A673 (cell line): ENCODE measurements at regions of chr12 and their contacts with region 1.

Region 1: DNA sequence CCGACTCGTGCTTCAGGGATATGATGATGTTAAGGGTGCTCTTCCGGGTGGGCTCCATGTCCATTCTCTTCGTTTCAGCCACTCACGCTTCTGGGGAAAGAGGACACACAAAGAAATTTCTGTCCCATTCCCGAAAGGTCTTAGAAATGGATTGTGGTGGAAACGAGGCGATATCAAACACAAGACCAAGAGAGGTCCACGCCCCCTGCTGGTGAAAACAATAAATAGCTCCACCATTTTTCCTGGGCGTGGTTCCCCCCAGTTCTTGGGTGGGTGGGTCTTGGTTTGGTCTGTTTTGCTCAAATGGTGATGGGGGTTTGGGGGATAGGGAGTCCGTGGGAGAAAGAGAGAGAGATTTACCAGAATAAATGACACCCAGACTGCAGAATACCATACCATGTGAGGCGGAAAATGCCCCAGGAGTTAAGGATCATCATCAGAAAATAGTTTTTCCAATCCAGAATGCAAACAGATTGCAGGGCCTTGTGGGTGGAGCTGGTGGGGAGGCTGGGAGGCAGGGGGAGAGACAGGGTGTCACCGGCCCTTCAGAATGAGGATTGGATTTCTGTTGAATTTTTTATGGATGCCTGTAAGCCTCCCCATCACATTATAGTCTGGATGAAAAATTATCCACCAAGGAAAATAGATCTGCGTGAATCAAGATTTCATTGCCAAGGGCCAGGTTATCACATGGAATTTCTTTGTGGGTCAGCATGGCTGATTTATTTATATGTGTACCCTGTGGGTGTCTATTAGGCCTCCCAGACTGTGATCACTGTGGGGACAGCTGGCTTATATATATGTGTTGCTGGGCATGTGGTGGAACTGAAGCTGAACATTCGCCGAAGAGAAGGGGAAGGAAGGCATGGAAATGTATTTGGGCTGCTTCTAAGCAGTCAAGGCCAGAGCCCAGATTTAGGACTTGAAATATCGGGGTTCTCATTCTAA is 55.8 kb downstream of the SRRM4 start:
- DNase-seq: peak; percentile 54
- H3K4me3 ChIP-seq: no peak overlapping the region
- H3K27ac ChIP-seq: no peak overlapping the region
- H3K4me1 ChIP-seq: no peaks in the 10 kb centered on the region
- H3K27me3 ChIP-seq: peaks cover 34% of the 10 kb centered on the region
- CTCF ChIP-seq: peak; percentile 78

Region 2: GRCh38 chr12:118404876-118405521 is 632.2 kb before region 1 on chr12:
- CTCF ChIA-PET with region 1: no interaction called
- POLR2A ChIA-PET with region 1: no interaction called
- intact Hi-C with region 1: loop called (anchors 5 kb)
- DNase-seq: peak; percentile 67
- H3K4me3 ChIP-seq: no peak overlapping the region
- H3K27ac ChIP-seq: no peak overlapping the region
- H3K4me1 ChIP-seq: no peaks in the 10 kb centered on the region
- H3K27me3 ChIP-seq: no peaks in the 10 kb centered on the region
- CTCF ChIP-seq: peak; percentile 91

Region 3: DNA sequence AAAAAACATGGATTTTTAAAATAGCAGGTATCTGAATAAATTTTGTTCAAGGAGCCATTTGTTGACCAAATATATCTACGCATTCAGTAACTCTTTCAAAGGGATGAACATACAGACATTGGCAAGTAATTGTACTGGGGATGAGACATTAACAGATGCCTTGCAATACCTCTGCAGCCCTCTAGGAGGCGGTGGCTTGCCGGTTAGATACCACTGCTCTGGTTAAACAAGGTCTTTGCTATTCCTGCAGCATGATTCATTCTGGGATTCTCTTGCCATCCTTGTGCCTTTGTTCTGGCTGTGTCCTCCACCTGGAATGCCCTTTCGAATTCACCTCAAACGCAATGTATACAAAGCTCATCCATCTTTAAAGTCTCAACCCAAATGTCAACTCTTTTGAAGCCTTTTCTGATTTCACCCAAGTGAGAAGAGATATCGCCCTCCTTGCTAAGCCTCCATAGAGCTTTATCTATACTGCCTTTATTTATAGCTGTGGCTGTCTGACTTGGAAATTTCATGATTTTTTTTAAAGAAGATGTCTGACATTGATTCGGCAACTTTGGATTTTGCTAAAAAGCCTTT is 186.8 kb before region 1 on chr12:
- CTCF ChIA-PET with region 1: no interaction called
- POLR2A ChIA-PET with region 1: no interaction called
- intact Hi-C with region 1: loop called (anchors 2 kb)
- DNase-seq: peak; percentile 22
- H3K4me3 ChIP-seq: no peak overlapping the region
- H3K27ac ChIP-seq: no peak overlapping the region
- H3K4me1 ChIP-seq: no peaks in the 10 kb centered on the region
- H3K27me3 ChIP-seq: peaks cover 4% of the 10 kb centered on the region
- CTCF ChIP-seq: peak; percentile 78